Posterior cingulate gyrus (tissue), 11 donors: ENCODE measurements at regions of chr1 and their contacts with region 1.

Region 1: GRCh38 chr1:151459331-151460046 is at the start of gene POGZ:
- DNase-seq: peak; percentile 93 to 99 (median 96)

Region 2: DNA sequence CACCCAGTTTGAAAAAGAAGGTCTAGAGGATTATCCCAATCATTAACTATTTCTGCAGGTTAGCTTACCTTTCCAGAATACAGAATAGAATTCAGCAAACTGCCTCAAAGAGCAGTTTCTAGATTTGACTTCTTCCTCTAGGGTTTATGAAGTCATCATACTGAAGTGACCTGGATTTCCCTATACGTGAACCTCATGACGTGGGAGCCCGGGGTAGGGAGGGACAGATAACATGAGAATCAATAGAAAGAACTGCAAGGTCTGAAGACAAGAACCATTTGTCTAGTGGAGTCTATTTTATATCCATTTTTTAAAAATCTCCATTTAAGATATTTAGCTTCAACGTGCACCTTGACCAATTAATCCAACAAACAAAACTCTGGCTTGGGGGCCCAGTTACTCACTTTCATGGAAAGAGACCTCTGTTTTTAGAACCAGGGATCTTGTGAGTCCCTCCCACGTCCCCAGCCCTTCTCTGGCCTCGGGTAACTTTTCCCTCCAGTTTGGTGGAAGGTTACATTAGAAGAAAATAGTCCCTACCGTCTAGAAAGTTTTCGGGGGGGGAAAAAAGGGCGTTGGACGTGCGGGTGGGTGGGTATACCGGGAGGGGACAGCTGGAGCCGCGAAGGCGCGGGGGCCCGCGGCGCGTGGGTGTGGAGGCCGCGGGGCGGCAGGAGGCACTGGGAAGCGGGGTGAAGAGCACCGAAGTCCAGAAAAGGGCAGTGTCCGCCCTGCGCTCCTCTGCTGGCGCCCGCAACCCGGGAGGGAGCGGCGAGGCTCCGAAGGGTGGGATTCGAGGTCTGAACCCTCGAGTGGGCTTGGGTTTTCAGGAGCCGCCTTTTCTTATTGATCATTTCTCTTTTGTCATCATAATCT is 13.6 kb after region 1 on chr1:
- intact Hi-C with region 1: loop called (anchors 1 kb)
- DNase-seq: peak in 4 of 10 donors; percentile 35 to 82 (median 54)

Region 3: DNA sequence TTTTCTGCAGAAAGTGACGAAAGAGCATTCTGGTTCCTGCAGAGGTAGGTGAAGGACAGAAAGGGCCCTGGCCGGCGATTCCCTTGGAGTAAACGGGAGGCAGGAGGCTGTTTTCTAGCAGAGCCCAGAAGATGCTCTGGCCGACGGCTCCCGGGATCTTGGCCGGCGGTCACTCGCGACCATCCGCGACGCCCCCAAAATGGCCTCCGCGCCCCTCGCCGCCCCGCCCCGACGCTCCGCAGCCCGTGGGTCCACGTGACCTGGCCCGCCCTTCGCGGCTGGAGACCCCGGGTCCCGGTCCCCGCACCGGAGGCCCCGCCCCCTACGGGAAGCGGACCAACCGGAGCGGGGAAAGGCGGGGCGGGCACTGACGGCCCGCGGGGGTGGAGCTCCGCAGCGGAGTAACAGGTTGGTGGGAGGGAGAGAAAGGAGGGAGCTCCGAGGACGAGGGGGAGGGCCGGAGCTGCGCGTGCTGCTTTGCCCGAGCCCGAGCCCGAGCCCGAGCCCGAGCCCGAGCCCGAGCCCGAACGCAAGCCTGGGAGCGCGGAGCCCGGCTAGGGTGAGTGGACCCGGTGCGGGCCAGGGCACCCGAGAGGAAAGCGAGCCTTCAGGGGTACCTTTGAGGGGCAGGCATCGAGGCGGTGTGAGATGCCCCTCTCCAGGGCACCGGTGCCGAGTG is 51.6 kb after region 1 on chr1 and contains the start of gene CGN:
- intact Hi-C with region 1: loop called (anchors 1 kb)
- DNase-seq: peak; percentile 80 to 99 (median 91)